PC-9 (cell line): ENCODE measurements at regions of chr17 and their contacts with region 1.

Region 1: GRCh38 chr17:4206962-4207361 is 56.8 kb downstream of the ANKFY1 start:
- DNase-seq: no peak
- H3K4me3 ChIP-seq: no peak overlapping the region
- H3K27ac ChIP-seq: no peak overlapping the region
- H3K4me1 ChIP-seq: no peaks in the 10 kb centered on the region
- H3K27me3 ChIP-seq: no peaks in the 10 kb centered on the region
- CTCF ChIP-seq: no peak

Region 2: GRCh38 chr17:4187076-4187475 is 19.9 kb before region 1 on chr17:
- CTCF ChIA-PET with region 1: no interaction called
- POLR2A ChIA-PET with region 1: no interaction called
- intact Hi-C with region 1: no loop called
- DNase-seq: no peak
- H3K4me3 ChIP-seq: no peak overlapping the region
- H3K27ac ChIP-seq: no peak overlapping the region
- H3K4me1 ChIP-seq: no peaks in the 10 kb centered on the region
- H3K27me3 ChIP-seq: no peaks in the 10 kb centered on the region
- CTCF ChIP-seq: no peak

Region 3: GRCh38 chr17:4407851-4408250 is 200.9 kb after region 1 on chr17:
- CTCF ChIA-PET with region 1: interaction called, 17 read pairs
- POLR2A ChIA-PET with region 1: no interaction called
- intact Hi-C with region 1: no loop called
- DNase-seq: peak; percentile 48 to 82
- H3K4me3 ChIP-seq: no peak overlapping the region
- H3K27ac ChIP-seq: 0 out of 2 replicates have a peak overlapping the region, but pooled peaks have one; percentile 6
- H3K4me1 ChIP-seq: peaks cover 4% of the 10 kb centered on the region; the same call in 1 of the 2 replicates
- H3K27me3 ChIP-seq: no peaks in the 10 kb centered on the region
- CTCF ChIP-seq: no peak